Posterior vena cava (tissue), 2 donors: ENCODE measurements at regions of chr10 and their contacts with region 1.

Region 1: GRCh38 chr10:13593535-13593934 is 6.8 kb downstream of the PRPF18 start:
- DNase-seq: no peak

Region 2: DNA sequence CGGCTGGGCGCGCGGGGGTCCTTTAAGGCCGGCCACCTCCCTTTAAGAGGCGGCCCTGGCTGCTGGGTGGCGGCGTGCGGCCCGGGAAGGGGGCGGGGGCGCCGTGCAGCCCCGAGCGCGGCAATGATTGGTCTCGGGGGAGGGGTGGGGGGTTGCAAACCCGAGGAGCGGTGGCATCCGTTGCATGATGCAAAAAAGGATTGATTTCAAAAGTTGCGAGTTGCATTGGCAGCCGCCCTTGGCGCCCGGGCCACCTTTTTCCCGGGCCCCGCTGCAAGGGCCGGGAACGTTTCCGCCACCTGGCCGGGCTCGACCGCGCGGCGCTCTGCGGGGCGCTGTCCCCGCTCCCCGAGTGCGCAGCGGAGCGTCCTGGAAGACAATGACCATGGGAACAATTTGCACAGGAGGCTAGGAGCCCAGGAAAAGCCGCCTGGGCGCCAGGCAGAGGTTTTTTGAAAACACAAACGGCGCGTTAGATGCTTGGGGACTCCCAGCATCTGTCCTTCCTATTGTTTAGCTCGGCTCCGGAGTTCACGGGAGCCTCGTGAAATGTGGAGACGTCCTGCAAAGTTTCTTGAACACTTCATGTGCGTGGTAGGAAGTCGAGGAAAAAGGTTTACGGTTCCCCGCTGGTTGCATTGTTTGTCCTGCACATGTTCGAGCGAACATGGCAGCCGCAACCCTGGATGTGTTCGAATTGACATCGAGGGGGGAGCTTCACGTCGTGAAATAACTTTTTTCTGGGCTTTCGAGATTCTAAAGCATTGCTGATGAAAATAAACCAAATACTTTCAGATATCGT is 245.1 kb before region 1 on chr10 and contains the start of gene SEPHS1:
- intact Hi-C with region 1: no loop called
- DNase-seq: peak; percentile 88
- total RNA-seq, gene SEPHS1: 29.7 to 30.7 TPM

Region 3: GRCh38 chr10:13608246-13608853 is 14.8 kb after region 1 on chr10:
- intact Hi-C with region 1: loop called in 1 of 2 experiments (anchors 1 kb)
- DNase-seq: no peak